Activated CD4-positive, alpha-beta T cell treated with anti-CD3 and anti-CD28 coated beads, Interleukin-2, amount 10 ng/mL, durations not matched to agents 24 days and 14 days (primary cell): ENCODE measurements at regions of chr6 and their contacts with region 1.

Region 1: DNA sequence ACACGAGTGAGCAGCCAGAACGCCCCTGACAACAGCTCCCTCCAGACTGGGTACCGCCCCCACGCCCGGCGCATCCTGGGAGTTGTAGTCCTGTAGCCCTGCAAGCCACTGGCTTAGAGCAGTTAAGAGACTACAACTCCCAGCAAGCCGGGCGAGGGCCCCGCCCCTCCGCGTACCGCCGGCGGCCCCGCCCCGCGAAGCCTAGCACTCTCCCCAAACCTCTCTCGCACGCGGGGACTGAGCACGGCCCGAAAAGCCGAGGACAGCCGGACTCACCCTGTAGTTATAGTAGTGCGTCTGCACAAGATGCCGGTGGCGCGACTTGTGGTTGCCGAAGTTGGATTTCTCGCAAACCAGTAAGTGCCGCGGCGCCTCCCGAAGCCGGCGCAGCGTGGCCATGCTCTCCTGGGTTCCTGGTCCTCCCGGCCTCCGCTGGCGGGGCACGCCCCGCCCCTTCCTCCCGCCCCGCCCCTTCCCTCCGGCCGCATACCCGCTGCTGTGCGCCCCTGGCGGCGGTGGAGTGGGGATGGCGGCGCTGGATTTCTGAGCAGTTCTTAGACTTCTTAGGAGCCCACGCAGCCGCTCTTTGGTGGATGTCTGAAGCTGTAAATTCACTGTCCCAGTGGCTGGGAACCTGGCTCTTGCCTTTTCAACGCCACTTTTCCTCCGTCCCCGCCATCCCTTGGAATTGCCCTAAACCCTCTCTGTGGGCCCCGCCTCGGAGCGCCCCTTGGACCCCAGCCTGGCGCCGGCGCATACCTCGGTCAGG is at the start of gene RPP40:
- DNase-seq: peak; percentile 100
- H3K4me3 Mint-ChIP-seq: peak within 1 kb of the TSS; percentile 95
- H3K27ac Mint-ChIP-seq: peak within 1 kb of the TSS; percentile 98
- H3K4me1 Mint-ChIP-seq: peaks cover 12% of the 10 kb centered on the region
- H3K27me3 Mint-ChIP-seq: no peaks in the 10 kb centered on the region
- total RNA-seq, gene RPP40: 14.2 and 16.4 TPM in 2 replicates

Region 2: GRCh38 chr6:4693173-4693970 is 310.4 kb before region 1 on chr6:
- intact Hi-C with region 1: no loop called
- DNase-seq: no peak
- H3K4me3 Mint-ChIP-seq: no peak overlapping the region
- H3K27ac Mint-ChIP-seq: no peak overlapping the region
- H3K4me1 Mint-ChIP-seq: no peaks in the 10 kb centered on the region
- H3K27me3 Mint-ChIP-seq: no peaks in the 10 kb centered on the region

Region 3: DNA sequence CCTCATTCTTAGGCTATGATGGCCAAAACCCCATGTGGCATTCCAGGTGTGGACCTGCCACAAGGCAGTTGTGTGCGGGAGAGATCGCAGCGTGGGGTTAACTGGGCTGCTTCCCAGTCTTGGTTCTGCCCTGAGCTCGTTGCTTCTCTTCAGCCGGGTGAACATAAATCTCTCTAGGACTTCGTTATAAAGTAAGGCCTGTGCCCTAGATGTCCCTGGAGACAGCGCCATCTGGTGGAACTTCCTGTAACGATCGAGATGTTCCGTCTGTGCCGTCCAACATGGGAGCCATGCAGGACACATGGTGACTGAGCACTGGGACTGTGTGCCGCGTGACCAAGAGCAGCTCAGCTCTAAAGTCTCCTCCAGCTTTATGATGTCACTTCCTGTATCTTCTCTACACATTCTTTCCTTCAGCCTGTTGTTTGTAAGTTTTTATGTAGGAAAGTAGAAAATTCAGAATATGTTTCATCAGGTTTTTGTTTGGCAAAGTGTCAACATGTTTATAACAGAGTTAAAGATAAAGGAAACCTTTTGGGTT is 26.9 kb after region 1 on chr6:
- intact Hi-C with region 1: loop called (anchors 2 kb)
- DNase-seq: peak; percentile 92
- H3K4me3 Mint-ChIP-seq: no peak overlapping the region
- H3K27ac Mint-ChIP-seq: peak overlapping the region; percentile 51
- H3K4me1 Mint-ChIP-seq: peaks cover 11% of the 10 kb centered on the region
- H3K27me3 Mint-ChIP-seq: peaks cover 3% of the 10 kb centered on the region